Activated naive CD4-positive, alpha-beta T cell treated with anti-CD3 and anti-CD28 coated beads for 36 hours (primary cell): ENCODE measurements at regions of chr1 and their contacts with region 1.

Region 1: GRCh38 chr1:96721416-96722160 is at the start of gene PTBP2:
- DNase-seq: peak; percentile 83
- H3K4me3 Mint-ChIP-seq: peak within 1 kb of the TSS; percentile 93
- H3K27ac Mint-ChIP-seq: peak within 1 kb of the TSS; percentile 92
- H3K4me1 Mint-ChIP-seq: peaks cover 23% of the 10 kb centered on the region
- H3K27me3 Mint-ChIP-seq: no peaks in the 10 kb centered on the region
- total RNA-seq, gene PTBP2: 12.6 to 13.1 TPM

Region 2: DNA sequence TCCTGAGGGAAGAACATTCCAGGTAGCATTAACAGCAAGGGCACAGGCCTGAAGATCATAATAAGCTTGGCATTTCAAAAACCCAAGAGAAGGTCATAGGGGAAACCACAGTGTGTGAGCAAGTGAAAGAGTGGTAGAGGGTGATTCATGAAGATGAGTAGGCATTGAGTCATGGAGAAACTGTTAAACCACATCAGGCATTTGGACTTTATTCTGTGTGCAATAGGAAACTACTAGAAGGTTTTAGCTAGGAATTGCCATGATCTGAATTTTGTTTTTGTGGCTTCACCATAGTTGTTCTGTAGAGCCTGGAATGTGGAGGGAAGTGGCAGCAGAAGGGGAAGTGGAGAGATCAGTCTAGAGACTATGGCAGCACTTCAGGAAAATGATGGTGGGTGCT is 359.0 kb before region 1 on chr1:
- CTCF ChIA-PET with region 1: no interaction called
- intact Hi-C with region 1: loop called (anchors 5 kb)
- DNase-seq: peak; percentile 10
- H3K4me3 Mint-ChIP-seq: no peak overlapping the region
- H3K27ac Mint-ChIP-seq: no peak overlapping the region
- H3K4me1 Mint-ChIP-seq: peaks cover 3% of the 10 kb centered on the region
- H3K27me3 Mint-ChIP-seq: no peaks in the 10 kb centered on the region

Region 3: GRCh38 chr1:97791251-97791650 is 1069.7 kb after region 1 on chr1:
- CTCF ChIA-PET with region 1: no interaction called
- intact Hi-C with region 1: loop called (anchors 1 kb)
- DNase-seq: no peak
- H3K4me3 Mint-ChIP-seq: no peak overlapping the region
- H3K27ac Mint-ChIP-seq: peak overlapping the region; percentile 8
- H3K4me1 Mint-ChIP-seq: peaks cover 35% of the 10 kb centered on the region
- H3K27me3 Mint-ChIP-seq: no peaks in the 10 kb centered on the region